ENCODE measurements at regions of chr4 and their contacts with region 1.

Region 1: GRCh38 chr4:38730830-38731646 is 51.8 kb downstream of the TLR10 start:
- DNase-seq: peak; percentile 92
- H3K4me3 ChIP-seq: no peak overlapping the region
- H3K27ac ChIP-seq: peak overlapping the region in 1 of 2 donors; percentile 14
- H3K4me1 ChIP-seq: no peaks in the 10 kb centered on the region
- H3K27me3 ChIP-seq: no peaks in the 10 kb centered on the region
- CTCF ChIP-seq: peak; percentile 95 to 97 (median 96)
- POLR2A ChIP-seq: no peak

Region 2: DNA sequence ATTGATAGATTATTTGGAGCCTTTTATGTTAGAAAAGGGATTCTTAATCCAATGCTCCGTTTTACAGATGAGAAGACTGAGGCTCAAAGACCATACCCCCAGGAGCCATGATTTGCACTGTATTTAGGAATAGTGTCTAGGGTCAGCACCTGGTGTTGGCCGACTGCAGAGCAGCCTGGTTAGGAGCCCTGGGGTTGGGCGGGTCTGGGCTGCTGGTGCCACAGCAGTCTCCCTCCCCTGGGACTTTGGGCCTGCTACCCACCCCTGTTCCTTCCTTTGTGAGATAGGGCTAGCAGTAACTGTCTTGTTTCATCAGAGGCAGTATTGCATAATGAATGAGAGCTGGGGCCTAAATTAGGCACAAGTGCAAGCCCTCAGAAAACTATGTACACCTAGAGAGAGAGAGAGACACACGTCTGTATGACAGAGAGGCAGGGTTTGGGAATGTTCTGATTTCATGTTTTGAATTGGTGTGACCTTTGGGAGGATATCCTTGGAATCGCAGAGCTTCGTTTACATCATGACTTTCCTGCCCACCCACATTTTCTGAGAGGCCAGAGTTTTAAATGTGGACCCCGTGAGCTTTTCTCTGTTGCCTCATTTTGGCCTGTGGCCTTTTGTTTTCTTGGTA is 659.1 kb before region 1 on chr4:
- intact Hi-C with region 1: loop called (anchors 5 kb)
- DNase-seq: no peak
- H3K4me3 ChIP-seq: no peak overlapping the region
- H3K27ac ChIP-seq: no peak overlapping the region
- H3K4me1 ChIP-seq: no peaks in the 10 kb centered on the region
- H3K27me3 ChIP-seq: no peaks in the 10 kb centered on the region
- CTCF ChIP-seq: no peak
- POLR2A ChIP-seq: no peak

Region 3: GRCh38 chr4:38179690-38180377 is 551.2 kb before region 1 on chr4:
- intact Hi-C with region 1: loop called (anchors 10 kb)
- DNase-seq: peak; percentile 85
- H3K4me3 ChIP-seq: no peak overlapping the region
- H3K27ac ChIP-seq: no peak overlapping the region
- H3K4me1 ChIP-seq: peaks cover 4% of the 10 kb centered on the region
- H3K27me3 ChIP-seq: no peaks in the 10 kb centered on the region
- CTCF ChIP-seq: peak; percentile 85 to 87 (median 85)
- POLR2A ChIP-seq: no peak

Measured in testis (tissue), 5 donors.